Gastrocnemius medialis (tissue), 4 donors: ENCODE measurements at regions of chr16 and their contacts with region 1.

Region 1: DNA sequence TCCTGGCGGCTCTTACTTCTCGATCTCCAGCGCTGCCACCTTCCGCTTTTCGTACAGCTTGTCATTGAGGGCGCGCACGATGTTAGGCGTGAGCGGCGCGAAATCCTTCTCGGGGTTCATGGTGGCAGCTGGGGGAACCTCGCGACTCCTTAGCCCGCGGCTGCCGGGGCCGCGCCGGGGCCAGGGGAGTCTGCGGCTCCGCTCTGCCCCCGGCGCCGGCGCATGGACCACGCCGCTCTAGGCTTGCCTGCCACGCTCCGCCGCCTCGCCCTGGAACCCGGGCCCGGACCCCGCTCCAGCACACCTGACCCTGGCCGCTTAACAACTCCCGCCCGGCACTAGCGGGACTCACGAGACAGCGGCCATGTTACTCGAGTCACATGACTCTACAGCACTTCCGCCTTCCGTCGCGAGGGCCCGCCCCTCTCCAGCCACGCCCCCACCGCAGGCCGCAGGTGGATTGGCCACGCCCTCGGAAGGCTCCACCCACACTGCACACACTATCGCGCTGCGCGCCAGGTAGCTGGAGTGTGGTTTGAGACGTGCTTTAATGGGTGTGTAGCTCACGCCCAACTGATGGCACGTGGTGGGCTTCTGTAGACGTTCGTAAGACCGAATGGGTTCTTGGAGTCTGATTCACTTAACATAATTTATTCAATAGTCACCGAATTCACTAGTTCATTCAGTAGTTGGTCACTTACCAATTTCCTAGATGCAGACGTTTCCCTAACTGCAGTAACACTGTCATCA is at the start of gene VAC14:
- DNase-seq: peak; percentile 84 to 93
- ATAC-seq: peak; percentile 95 to 98
- H3K4me3 ChIP-seq: peak within 1 kb of the TSS; percentile 76 to 94 (median 82)
- H3K27ac ChIP-seq: peak within 1 kb of the TSS; percentile 69 to 80 (median 77)
- H3K4me1 ChIP-seq: peaks cover 9 to 12% of the 10 kb centered on the region in 2 donors
- H3K27me3 ChIP-seq: no peaks in the 10 kb centered on the region
- CTCF ChIP-seq: no peak
- POLR2A ChIP-seq: peak; percentile 61 to 66
- total RNA-seq, gene VAC14: 19.8 to 30.9 (median 27.0) TPM

Region 2: GRCh38 chr16:70750893-70751475 is 50.0 kb before region 1 on chr16:
- in situ Hi-C with region 1: no loop called
- intact Hi-C with region 1: loop called (anchors 2 kb)
- DNase-seq: peak; percentile 94 to 99
- ATAC-seq: peak; percentile 84 to 92
- H3K4me3 ChIP-seq: peak overlapping the region in 2 of 4 donors; percentile 8 to 19
- H3K27ac ChIP-seq: peak overlapping the region; percentile 81 to 88 (median 83)
- H3K4me1 ChIP-seq: peaks cover 70 to 79% of the 10 kb centered on the region in 2 donors
- H3K27me3 ChIP-seq: no peaks in the 10 kb centered on the region
- CTCF ChIP-seq: peak in 1 of 5 experiments; percentile 15
- POLR2A ChIP-seq: no peak

Region 3: DNA sequence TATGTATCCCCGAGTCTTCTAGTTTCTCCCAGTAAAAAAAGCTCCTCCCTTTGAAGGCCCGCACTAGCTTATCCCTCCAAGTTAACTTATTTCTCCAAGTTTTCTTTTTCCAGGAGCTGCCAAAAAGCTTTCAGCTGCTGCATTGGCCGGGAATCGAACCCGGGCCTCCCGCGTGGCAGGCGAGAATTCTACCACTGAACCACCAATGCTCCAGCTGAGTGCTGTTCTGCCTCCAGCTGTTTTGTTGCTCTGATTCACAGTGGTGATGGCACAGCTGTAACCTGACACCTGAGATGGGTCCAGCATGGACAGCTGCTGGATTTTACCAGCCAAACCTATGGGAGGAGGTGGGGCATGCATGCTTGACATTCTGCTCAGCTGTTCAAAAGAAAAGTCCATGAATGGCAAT is 22.1 kb before region 1 on chr16:
- in situ Hi-C with region 1: no loop called
- intact Hi-C with region 1: loop called (anchors 2 kb)
- DNase-seq: peak; percentile 32 to 74
- ATAC-seq: peak; percentile 75 to 91
- H3K4me3 ChIP-seq: no peak overlapping the region
- H3K27ac ChIP-seq: peak overlapping the region; percentile 6 to 68 (median 52)
- H3K4me1 ChIP-seq: peaks cover 8 to 10% of the 10 kb centered on the region in 2 donors
- H3K27me3 ChIP-seq: no peaks in the 10 kb centered on the region
- CTCF ChIP-seq: no peak
- POLR2A ChIP-seq: no peak